CD4-positive, alpha-beta T cell (primary cell): ENCODE measurements at regions of chr10 and their contacts with region 1.

Region 1: DNA sequence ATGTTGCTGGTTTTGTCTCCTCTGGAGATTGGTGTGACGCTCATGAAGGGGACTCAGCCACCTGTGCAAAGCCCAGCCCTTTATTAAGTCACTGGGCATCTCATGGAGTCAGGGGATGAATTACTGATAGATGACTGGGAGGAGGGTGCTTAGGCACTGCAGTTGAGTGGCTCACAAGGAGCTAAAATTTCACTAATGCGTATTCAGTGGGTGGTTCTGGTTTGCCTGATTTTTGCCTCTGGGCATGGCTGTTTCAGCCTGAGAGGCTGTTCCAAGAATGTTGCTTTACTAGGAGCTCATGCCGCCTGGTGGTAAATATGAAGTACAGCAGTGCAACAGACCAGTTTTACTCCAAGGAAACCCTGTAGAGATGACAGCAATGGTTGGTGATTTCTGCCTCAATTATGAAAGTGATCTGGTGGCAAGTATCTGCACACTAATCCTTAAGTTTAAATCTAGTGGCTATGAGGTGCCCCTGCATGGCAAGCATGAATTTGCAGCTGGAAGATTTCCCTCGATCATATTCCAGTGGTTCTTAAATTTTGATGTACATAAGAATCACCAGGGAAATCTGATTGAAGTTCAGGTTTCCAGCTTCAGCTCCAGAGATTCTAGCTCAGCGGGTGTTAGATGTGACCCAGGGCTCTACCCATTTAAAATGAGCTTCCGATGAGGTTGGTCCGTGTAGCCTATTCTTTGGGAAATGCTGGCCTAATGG is 19.9 kb downstream of the ACTA2 start:
- DNase-seq: peak in 11 of 14 experiments; percentile 2 to 76 (median 20)
- ATAC-seq: peak; percentile 82
- H3K4me3 ChIP-seq: no peak overlapping the region
- H3K4me3 Mint-ChIP-seq: no peak overlapping the region
- H3K27ac ChIP-seq: no peak overlapping the region
- H3K27ac Mint-ChIP-seq: no peak overlapping the region
- H3K4me1 ChIP-seq: peaks cover 11% of the 10 kb centered on the region
- H3K4me1 Mint-ChIP-seq: peaks cover 21% of the 10 kb centered on the region
- H3K27me3 ChIP-seq: no peaks in the 10 kb centered on the region
- H3K27me3 Mint-ChIP-seq: no peaks in the 10 kb centered on the region
- CTCF ChIP-seq: peak; percentile 76

Region 2: GRCh38 chr10:88565072-88565471 is 367.6 kb before region 1 on chr10:
- CTCF ChIA-PET with region 1: no interaction called
- POLR2A ChIA-PET with region 1: no interaction called
- intact Hi-C with region 1: loop called (anchors 1 to 5 kb)
- DNase-seq: peak in 3 of 14 experiments; percentile 23 to 30 (median 29)
- ATAC-seq: peak; percentile 58
- H3K4me3 ChIP-seq: no peak overlapping the region
- H3K4me3 Mint-ChIP-seq: no peak overlapping the region
- H3K27ac ChIP-seq: no peak overlapping the region
- H3K27ac Mint-ChIP-seq: no peak overlapping the region
- H3K4me1 ChIP-seq: peaks cover 6% of the 10 kb centered on the region
- H3K4me1 Mint-ChIP-seq: no peaks in the 10 kb centered on the region
- H3K27me3 ChIP-seq: no peaks in the 10 kb centered on the region
- H3K27me3 Mint-ChIP-seq: no peaks in the 10 kb centered on the region
- CTCF ChIP-seq: peak; percentile 26

Region 3: GRCh38 chr10:88835096-88835909 is 97.4 kb before region 1 on chr10:
- CTCF ChIA-PET with region 1: interaction called, 85 read pairs
- POLR2A ChIA-PET with region 1: interaction called, 8 read pairs
- intact Hi-C with region 1: loop called (anchors 1 kb)
- DNase-seq: peak; percentile 77 to 93 (median 83)
- ATAC-seq: peak; percentile 91
- H3K4me3 ChIP-seq: no peak overlapping the region
- H3K4me3 Mint-ChIP-seq: no peak overlapping the region
- H3K27ac ChIP-seq: no peak overlapping the region
- H3K27ac Mint-ChIP-seq: no peak overlapping the region
- H3K4me1 ChIP-seq: peaks cover 17% of the 10 kb centered on the region
- H3K4me1 Mint-ChIP-seq: peaks cover 33% of the 10 kb centered on the region
- H3K27me3 ChIP-seq: no peaks in the 10 kb centered on the region
- H3K27me3 Mint-ChIP-seq: no peaks in the 10 kb centered on the region
- CTCF ChIP-seq: peak; percentile 93

Region 4: GRCh38 chr10:88983206-88983605 is 50.5 kb after region 1 on chr10:
- CTCF ChIA-PET with region 1: interaction called, 9 read pairs
- POLR2A ChIA-PET with region 1: no interaction called
- intact Hi-C with region 1: loop called in 1 of 2 experiments (anchors 5 kb)
- DNase-seq: peak in 2 of 14 experiments; percentile 21 to 47
- ATAC-seq: peak; percentile 39
- H3K4me3 ChIP-seq: no peak overlapping the region
- H3K4me3 Mint-ChIP-seq: no peak overlapping the region
- H3K27ac ChIP-seq: no peak overlapping the region
- H3K27ac Mint-ChIP-seq: peak overlapping the region; percentile 17
- H3K4me1 ChIP-seq: peaks cover 10% of the 10 kb centered on the region
- H3K4me1 Mint-ChIP-seq: peaks cover 38% of the 10 kb centered on the region
- H3K27me3 ChIP-seq: no peaks in the 10 kb centered on the region
- H3K27me3 Mint-ChIP-seq: no peaks in the 10 kb centered on the region
- CTCF ChIP-seq: no peak

Region 5: GRCh38 chr10:88996927-88997326 is 64.2 kb after region 1 on chr10:
- CTCF ChIA-PET with region 1: interaction called, 20 read pairs
- POLR2A ChIA-PET with region 1: interaction called, 4 read pairs
- intact Hi-C with region 1: no loop called
- DNase-seq: peak in 3 of 14 experiments; percentile 59 to 63 (median 63)
- ATAC-seq: peak; percentile 19
- H3K4me3 ChIP-seq: no peak overlapping the region
- H3K4me3 Mint-ChIP-seq: no peak overlapping the region
- H3K27ac ChIP-seq: no peak overlapping the region
- H3K27ac Mint-ChIP-seq: peak overlapping the region; percentile 51
- H3K4me1 ChIP-seq: peaks cover 45% of the 10 kb centered on the region
- H3K4me1 Mint-ChIP-seq: peaks cover 80% of the 10 kb centered on the region
- H3K27me3 ChIP-seq: no peaks in the 10 kb centered on the region
- H3K27me3 Mint-ChIP-seq: no peaks in the 10 kb centered on the region
- CTCF ChIP-seq: no peak

Region 6: GRCh38 chr10:89029785-89030437 is 97.2 kb after region 1 on chr10:
- CTCF ChIA-PET with region 1: interaction called, 8 read pairs
- POLR2A ChIA-PET with region 1: no interaction called
- intact Hi-C with region 1: loop called (anchors 1 to 5 kb)
- DNase-seq: peak; percentile 44 to 84 (median 58)
- ATAC-seq: peak; percentile 80
- H3K4me3 ChIP-seq: no peak overlapping the region
- H3K4me3 Mint-ChIP-seq: no peak overlapping the region
- H3K27ac ChIP-seq: no peak overlapping the region
- H3K27ac Mint-ChIP-seq: no peak overlapping the region
- H3K4me1 ChIP-seq: peaks cover 3% of the 10 kb centered on the region
- H3K4me1 Mint-ChIP-seq: peaks cover 9% of the 10 kb centered on the region
- H3K27me3 ChIP-seq: no peaks in the 10 kb centered on the region
- H3K27me3 Mint-ChIP-seq: no peaks in the 10 kb centered on the region
- CTCF ChIP-seq: peak; percentile 93

Region 7: DNA sequence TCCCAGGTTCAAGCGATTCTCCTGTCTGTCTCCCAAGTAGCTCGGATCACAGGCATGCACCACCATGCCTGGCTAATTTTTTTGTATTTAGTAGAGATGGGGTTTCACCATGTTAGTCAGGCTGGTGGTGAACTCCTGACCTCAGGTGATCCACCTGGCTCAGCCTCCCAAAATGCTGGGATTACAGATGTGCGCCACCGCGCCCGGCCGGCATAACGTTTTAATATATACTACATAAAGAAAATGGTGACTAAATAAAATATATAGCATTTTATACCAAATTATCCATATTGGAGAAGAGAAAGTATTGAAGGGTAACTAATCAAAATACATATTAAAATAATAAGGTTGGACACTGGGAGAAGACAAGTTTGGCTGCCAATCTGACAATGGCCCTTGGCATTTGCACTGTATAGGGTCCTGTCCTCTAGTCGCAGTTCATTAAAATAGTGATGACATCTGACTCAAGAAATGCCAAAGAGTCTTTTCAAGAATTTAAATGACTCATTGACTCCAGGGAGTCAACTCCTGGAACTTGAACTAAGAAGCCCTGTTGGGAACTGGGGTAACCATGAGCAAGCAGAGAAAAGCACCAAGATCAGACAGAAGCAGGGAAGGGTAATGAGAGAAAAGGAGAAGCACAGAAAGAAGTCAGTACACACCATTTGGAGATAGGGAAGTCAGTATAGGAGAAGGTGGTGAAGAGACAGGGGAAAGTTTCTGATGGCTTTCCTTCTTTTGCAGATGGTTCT is 183.4 kb after region 1 on chr10:
- CTCF ChIA-PET with region 1: no interaction called
- POLR2A ChIA-PET with region 1: no interaction called
- intact Hi-C with region 1: no loop called
- DNase-seq: peak in 2 of 14 experiments; percentile 26 to 38
- ATAC-seq: no peak
- H3K4me3 ChIP-seq: no peak overlapping the region
- H3K4me3 Mint-ChIP-seq: no peak overlapping the region
- H3K27ac ChIP-seq: no peak overlapping the region
- H3K27ac Mint-ChIP-seq: no peak overlapping the region
- H3K4me1 ChIP-seq: no peaks in the 10 kb centered on the region
- H3K4me1 Mint-ChIP-seq: no peaks in the 10 kb centered on the region
- H3K27me3 ChIP-seq: no peaks in the 10 kb centered on the region
- H3K27me3 Mint-ChIP-seq: peaks cover 4% of the 10 kb centered on the region
- CTCF ChIP-seq: no peak

Region 8: DNA sequence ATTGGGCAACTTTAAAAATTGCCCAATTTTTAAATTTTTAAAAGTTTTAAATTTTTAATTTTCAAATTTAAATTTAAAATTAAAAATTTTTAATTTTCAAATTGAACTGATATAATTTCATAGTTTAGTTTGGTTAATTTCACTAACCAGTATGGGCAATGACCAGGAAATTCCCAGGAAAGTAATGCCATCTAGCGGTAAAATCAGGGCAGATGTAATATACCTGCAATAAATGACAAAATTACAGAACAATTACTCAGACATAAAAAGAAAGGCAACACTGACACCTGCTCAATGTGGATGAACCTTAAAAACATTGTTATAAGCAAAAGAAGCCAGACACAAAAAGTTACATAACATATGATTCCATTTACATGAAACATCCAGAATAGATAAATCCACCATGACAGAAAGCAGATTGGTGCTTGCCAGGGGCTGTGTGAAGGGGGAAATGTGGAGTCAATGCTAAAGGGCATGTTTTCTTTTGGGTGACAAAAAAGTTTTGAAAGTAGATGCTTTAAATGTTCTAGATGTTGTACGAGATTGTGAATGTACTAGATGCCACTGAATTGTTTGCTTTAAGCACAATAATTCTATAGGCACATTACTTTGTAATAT is 631.3 kb after region 1 on chr10:
- CTCF ChIA-PET with region 1: no interaction called
- POLR2A ChIA-PET with region 1: no interaction called
- intact Hi-C with region 1: loop called in 1 of 2 experiments (anchors 10 kb)
- DNase-seq: peak in 4 of 14 experiments; percentile 16 to 72 (median 66)
- ATAC-seq: peak; percentile 63
- H3K4me3 ChIP-seq: no peak overlapping the region
- H3K4me3 Mint-ChIP-seq: no peak overlapping the region
- H3K27ac ChIP-seq: no peak overlapping the region
- H3K27ac Mint-ChIP-seq: no peak overlapping the region
- H3K4me1 ChIP-seq: no peaks in the 10 kb centered on the region
- H3K4me1 Mint-ChIP-seq: no peaks in the 10 kb centered on the region
- H3K27me3 ChIP-seq: no peaks in the 10 kb centered on the region
- H3K27me3 Mint-ChIP-seq: peaks cover 12% of the 10 kb centered on the region
- CTCF ChIP-seq: peak; percentile 94

Region 9: DNA sequence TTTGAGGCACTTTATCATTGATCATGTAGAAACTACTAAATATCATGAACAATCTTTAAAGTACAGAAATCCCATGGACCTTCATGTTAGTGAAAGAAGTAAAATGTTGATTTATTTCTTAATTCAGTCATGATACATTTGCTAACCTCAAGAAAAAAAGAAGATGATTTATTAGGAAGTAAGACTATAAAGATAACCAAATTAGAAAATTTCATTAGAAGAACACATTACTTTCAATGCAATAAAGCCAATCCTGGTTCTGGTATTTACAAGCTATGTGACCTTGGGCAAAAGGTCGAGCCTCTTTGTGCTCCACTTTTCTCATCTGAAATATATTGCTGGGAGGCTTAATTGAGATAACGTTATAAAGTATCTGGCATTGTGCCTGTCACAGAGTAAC is 1133.7 kb after region 1 on chr10:
- CTCF ChIA-PET with region 1: no interaction called
- POLR2A ChIA-PET with region 1: no interaction called
- intact Hi-C with region 1: no loop called
- DNase-seq: no peak
- ATAC-seq: no peak
- H3K4me3 ChIP-seq: no peak overlapping the region
- H3K4me3 Mint-ChIP-seq: no peak overlapping the region
- H3K27ac ChIP-seq: no peak overlapping the region
- H3K27ac Mint-ChIP-seq: no peak overlapping the region
- H3K4me1 ChIP-seq: no peaks in the 10 kb centered on the region
- H3K4me1 Mint-ChIP-seq: no peaks in the 10 kb centered on the region
- H3K27me3 ChIP-seq: no peaks in the 10 kb centered on the region
- H3K27me3 Mint-ChIP-seq: no peaks in the 10 kb centered on the region
- CTCF ChIP-seq: no peak